ENCODE measurements at regions of chr7 and their contacts with region 1.

Region 1: GRCh38 chr7:37504801-37505200 is 56.1 kb upstream of the ELMO1 start:
- DNase-seq: no peak
- H3K4me3 Mint-ChIP-seq: no peak overlapping the region
- H3K27ac Mint-ChIP-seq: no peak overlapping the region
- H3K4me1 Mint-ChIP-seq: peaks cover 5% of the 10 kb centered on the region
- H3K27me3 Mint-ChIP-seq: no peaks in the 10 kb centered on the region
- CTCF ChIP-seq: no peak

Region 2: GRCh38 chr7:37284805-37285231 is 220.0 kb before region 1 on chr7:
- CTCF ChIA-PET with region 1: no interaction called
- POLR2A ChIA-PET with region 1: no interaction called
- intact Hi-C with region 1: loop called (anchors 5 kb)
- DNase-seq: peak; percentile 51
- H3K4me3 Mint-ChIP-seq: no peak overlapping the region
- H3K27ac Mint-ChIP-seq: no peak overlapping the region
- H3K4me1 Mint-ChIP-seq: peaks cover 6% of the 10 kb centered on the region
- H3K27me3 Mint-ChIP-seq: no peaks in the 10 kb centered on the region
- CTCF ChIP-seq: peak; percentile 46

Region 3: GRCh38 chr7:37901236-37901827 is 396.5 kb after region 1 on chr7:
- CTCF ChIA-PET with region 1: no interaction called
- POLR2A ChIA-PET with region 1: no interaction called
- intact Hi-C with region 1: no loop called
- DNase-seq: peak; percentile 53
- H3K4me3 Mint-ChIP-seq: no peak overlapping the region
- H3K27ac Mint-ChIP-seq: no peak overlapping the region
- H3K4me1 Mint-ChIP-seq: no peaks in the 10 kb centered on the region
- H3K27me3 Mint-ChIP-seq: peaks cover 35% of the 10 kb centered on the region
- CTCF ChIP-seq: peak; percentile 44